ENCODE measurements at regions of chr14 and their contacts with region 1.

Region 1: GRCh38 chr14:23186913-23187654 is 3.6 kb upstream of the SLC7A8 start:
- DNase-seq: peak in 1 of 2 experiments; percentile 51
- H3K4me3 ChIP-seq: no peak overlapping the region
- H3K27ac ChIP-seq: no peak overlapping the region
- H3K4me1 ChIP-seq: peaks cover 0 to 2% (median under 1%) of the 10 kb centered on the region in 4 experiments; a peak in 5 of 7 replicates
- H3K27me3 ChIP-seq: no peaks in the 10 kb centered on the region
- CTCF ChIP-seq: peak in 2 of 3 experiments; percentile 78 to 81; a peak in 3 of 4 replicates
- EP300 ChIP-seq: no peak
- POLR2A ChIP-seq: no peak
- RAD21 ChIP-seq: peak; percentile 85 to 86

Region 2: GRCh38 chr14:23136566-23137133 is 50.4 kb before region 1 on chr14:
- CTCF ChIA-PET with region 1: interaction called, 10 read pairs
- POLR2A ChIA-PET with region 1: interaction called, 3 read pairs
- DNase-seq: no peak
- H3K4me3 ChIP-seq: no peak overlapping the region
- H3K27ac ChIP-seq: no peak overlapping the region
- H3K4me1 ChIP-seq: no peaks in the 10 kb centered on the region
- H3K27me3 ChIP-seq: no peaks in the 10 kb centered on the region
- CTCF ChIP-seq: no peak
- EP300 ChIP-seq: no peak
- POLR2A ChIP-seq: no peak
- RAD21 ChIP-seq: no peak

Region 3: DNA sequence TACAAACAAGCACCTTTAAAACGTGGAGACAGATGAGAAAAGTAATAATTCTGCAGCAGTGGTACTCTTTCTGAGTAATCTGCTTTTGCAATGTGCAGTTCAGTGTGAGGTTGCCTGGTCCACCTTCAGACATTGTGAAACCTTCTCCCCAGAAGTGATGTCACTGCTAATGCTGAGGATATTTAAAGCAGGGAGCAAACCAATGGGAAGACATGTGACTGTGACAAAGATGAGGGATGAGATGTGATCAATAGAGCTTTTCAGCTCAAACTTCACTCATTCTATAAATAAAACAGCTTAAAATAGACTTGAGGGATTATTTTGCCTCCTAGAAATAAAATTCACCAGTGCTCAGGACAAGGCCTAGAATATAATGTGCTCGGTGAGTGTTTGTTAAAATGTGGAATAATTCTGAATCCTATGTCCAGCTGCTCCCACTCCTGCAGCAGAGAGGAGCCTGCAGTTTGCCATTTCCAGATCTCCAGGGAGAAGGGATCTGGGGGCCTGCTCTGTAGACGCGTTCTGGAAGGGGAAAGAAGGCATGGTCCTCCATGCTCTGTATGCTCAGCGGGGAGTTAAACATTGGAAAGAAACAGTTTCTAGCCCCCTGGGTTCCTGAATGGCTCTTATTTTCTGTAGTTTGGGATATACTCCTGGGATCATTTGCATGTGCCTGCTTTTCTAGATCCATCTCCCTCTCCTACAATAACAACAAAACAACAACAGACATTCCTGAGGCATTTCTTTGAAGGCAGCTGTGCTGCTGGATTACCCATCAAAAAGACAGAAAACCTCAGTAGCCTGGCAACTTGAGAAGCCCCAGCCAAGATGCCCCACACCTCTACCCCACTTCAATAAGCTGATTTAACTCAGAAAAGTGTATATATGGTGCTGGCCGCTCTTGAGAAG is 12.6 kb before region 1 on chr14:
- CTCF ChIA-PET with region 1: interaction called, 128 read pairs
- POLR2A ChIA-PET with region 1: interaction called, 10 read pairs
- DNase-seq: no peak
- H3K4me3 ChIP-seq: no peak overlapping the region; a peak in 1 of 8 replicates
- H3K27ac ChIP-seq: no peak overlapping the region
- H3K4me1 ChIP-seq: peaks cover 2 to 18% (median 13%) of the 10 kb centered on the region in 4 experiments; a peak in 5 of 7 replicates
- H3K27me3 ChIP-seq: no peaks in the 10 kb centered on the region
- CTCF ChIP-seq: no peak
- EP300 ChIP-seq: no peak
- POLR2A ChIP-seq: no peak
- RAD21 ChIP-seq: no peak

Region 4: DNA sequence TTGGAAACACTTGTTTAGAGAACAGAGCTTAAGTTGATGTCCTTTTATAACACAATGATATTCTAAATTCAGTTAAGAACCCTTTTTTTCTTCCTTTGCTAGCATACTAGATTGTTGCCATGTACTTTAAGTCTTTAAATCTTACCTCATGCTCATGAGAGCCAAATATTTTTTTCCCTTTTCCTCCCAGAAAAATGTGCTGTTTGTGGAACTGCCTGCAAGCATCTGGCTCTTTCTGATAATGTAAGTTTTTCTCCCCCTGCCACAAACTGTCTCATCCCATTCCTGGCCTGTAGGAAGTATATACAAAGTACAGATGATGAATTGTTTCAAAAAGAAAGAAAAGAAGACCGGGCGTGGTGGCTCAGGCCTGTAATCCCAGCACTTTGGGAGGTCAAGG is 56.0 kb after region 1 on chr14:
- CTCF ChIA-PET with region 1: interaction called, 11 read pairs
- POLR2A ChIA-PET with region 1: no interaction called
- DNase-seq: no peak
- H3K4me3 ChIP-seq: no peak overlapping the region
- H3K27ac ChIP-seq: no peak overlapping the region
- H3K4me1 ChIP-seq: no peaks in the 10 kb centered on the region; a peak in 1 of 7 replicates
- H3K27me3 ChIP-seq: no peaks in the 10 kb centered on the region
- CTCF ChIP-seq: no peak
- EP300 ChIP-seq: no peak
- POLR2A ChIP-seq: no peak
- RAD21 ChIP-seq: no peak